ENCODE measurements at regions of chr14 and their contacts with region 1.

Region 1: GRCh38 chr14:65847075-65847847 is 434.7 kb downstream of the FUT8 start:
- DNase-seq: peak; percentile 95
- H3K4me3 Mint-ChIP-seq: peak overlapping the region; percentile 71
- H3K27ac Mint-ChIP-seq: peak overlapping the region; percentile 87
- H3K4me1 Mint-ChIP-seq: peaks cover 67% of the 10 kb centered on the region
- H3K27me3 Mint-ChIP-seq: no peaks in the 10 kb centered on the region

Region 2: GRCh38 chr14:65866886-65867285 is 19.6 kb after region 1 on chr14:
- intact Hi-C with region 1: loop called (anchors 2 kb)
- DNase-seq: no peak
- H3K4me3 Mint-ChIP-seq: no peak overlapping the region
- H3K27ac Mint-ChIP-seq: no peak overlapping the region
- H3K4me1 Mint-ChIP-seq: peaks cover 42% of the 10 kb centered on the region
- H3K27me3 Mint-ChIP-seq: no peaks in the 10 kb centered on the region

Region 3: GRCh38 chr14:65915125-65915524 is 67.9 kb after region 1 on chr14:
- intact Hi-C with region 1: loop called (anchors 2 kb)
- DNase-seq: no peak
- H3K4me3 Mint-ChIP-seq: no peak overlapping the region
- H3K27ac Mint-ChIP-seq: no peak overlapping the region
- H3K4me1 Mint-ChIP-seq: peaks cover 33% of the 10 kb centered on the region
- H3K27me3 Mint-ChIP-seq: peaks cover 3% of the 10 kb centered on the region

Region 4: DNA sequence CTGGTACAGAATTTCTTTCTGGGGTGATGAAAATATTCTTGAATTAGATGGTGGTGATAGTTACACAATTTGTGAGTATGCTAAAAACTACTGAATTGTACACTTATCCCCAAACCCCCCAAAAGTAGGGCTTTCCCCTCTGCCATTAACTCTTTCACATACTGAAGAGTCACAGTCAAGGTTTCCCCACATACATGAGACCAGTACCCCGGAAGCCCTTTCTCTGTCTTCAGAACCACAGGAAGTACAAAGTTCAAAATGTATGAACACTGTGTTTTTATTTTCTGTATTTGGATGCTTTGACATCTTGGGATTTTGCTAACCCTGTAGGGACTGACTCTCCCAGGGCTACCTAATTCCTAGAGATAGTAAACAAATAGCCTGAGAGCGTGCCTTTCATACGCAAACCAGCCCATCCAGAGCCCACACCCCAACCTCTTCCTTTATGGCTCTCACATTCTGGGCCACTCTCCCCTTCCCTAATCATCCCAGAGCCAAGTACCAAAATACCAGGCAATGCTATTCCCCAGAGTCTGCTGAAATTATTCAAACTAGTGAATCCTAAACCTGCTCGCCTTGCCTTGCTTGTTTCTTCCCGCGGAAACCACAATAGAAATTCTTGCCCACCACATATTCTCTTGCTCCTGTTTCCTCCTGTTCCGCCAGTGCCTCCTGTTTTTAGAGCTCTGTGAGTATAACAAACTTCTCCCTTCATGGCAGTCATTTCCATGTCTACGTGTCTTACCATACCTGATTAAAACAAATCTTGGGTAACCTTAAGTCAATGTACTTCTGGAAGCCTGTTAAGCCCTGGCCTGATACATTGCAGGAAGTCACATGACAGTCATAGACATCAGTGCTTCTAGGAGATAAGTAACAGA is 90.1 kb after region 1 on chr14:
- intact Hi-C with region 1: loop called (anchors 2 kb)
- DNase-seq: peak; percentile 68
- H3K4me3 Mint-ChIP-seq: peak overlapping the region; percentile 68
- H3K27ac Mint-ChIP-seq: peak overlapping the region; percentile 84
- H3K4me1 Mint-ChIP-seq: peaks cover 44% of the 10 kb centered on the region
- H3K27me3 Mint-ChIP-seq: no peaks in the 10 kb centered on the region

Region 5: GRCh38 chr14:65958664-65959562 is 111.7 kb after region 1 on chr14:
- intact Hi-C with region 1: loop called (anchors 1 kb)
- DNase-seq: peak; percentile 63
- H3K4me3 Mint-ChIP-seq: no peak overlapping the region
- H3K27ac Mint-ChIP-seq: no peak overlapping the region
- H3K4me1 Mint-ChIP-seq: peaks cover 33% of the 10 kb centered on the region
- H3K27me3 Mint-ChIP-seq: peaks cover 19% of the 10 kb centered on the region